ENCODE measurements at regions of chr4 and their contacts with region 1.

Region 1: GRCh38 chr4:76377911-76378310 is 43.0 kb downstream of the CCDC158 start:
- DNase-seq: peak; percentile 37 to 65 (median 60)
- H3K4me3 ChIP-seq: no peak overlapping the region
- H3K27ac ChIP-seq: no peak overlapping the region
- H3K4me1 ChIP-seq: peaks cover 0 to 5% (median 1%) of the 10 kb centered on the region in 4 experiments
- H3K27me3 ChIP-seq: no peaks in the 10 kb centered on the region

Region 2: GRCh38 chr4:76279472-76279871 is 98.4 kb before region 1 on chr4:
- CTCF ChIA-PET with region 1: interaction called, 54 read pairs
- POLR2A ChIA-PET with region 1: no interaction called
- DNase-seq: peak; percentile 28 to 36 (median 36)
- H3K4me3 ChIP-seq: no peak overlapping the region
- H3K27ac ChIP-seq: no peak overlapping the region
- H3K4me1 ChIP-seq: peaks cover 0 to 4% (median 0%) of the 10 kb centered on the region in 4 experiments
- H3K27me3 ChIP-seq: no peaks in the 10 kb centered on the region

Region 3: DNA sequence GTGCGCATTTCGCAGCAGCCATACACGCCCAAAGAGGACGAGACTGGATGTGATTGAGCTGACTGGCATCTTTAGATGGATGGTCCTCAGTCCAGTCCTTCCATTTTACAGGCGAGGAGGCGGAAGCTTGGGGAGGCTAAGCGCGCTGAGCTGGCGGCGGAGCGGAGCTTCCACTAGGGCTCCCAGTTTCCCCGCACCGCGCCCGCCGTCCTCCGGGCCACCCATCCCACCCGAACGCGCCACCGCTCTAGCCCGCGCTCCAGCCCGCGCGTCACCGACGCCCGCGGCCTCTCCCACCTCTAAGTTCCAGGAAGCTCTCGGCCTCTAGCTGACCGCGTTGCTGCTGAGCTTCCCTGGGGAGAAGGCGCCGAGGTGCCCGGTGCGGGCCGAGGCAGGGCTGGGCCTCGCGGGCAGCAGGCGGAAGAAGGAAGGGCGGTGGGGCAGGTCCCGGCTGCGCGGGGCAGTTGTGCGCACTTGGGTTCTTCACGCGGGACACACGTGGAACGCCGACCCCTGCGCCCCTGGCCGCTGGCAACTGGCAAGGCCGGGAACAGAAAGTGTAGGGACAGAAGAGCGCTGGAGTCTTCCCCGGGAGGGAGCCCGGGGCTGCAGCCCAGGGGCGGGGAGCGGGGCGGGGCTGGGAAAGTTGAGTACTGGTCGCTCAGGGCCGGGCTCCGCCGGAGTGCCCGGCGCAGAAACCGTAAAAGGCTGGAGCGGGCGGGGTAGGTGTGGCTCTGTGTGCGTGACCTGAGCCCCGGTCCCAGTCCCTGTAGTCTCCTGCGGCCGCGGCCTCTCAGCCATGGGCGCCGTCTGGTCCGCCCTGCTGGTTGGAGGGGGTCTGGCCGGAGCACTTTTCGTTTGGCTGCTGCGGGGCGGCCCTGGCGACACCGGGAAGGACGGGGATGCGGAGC is 71.7 kb before region 1 on chr4 and contains the start of gene STBD1:
- CTCF ChIA-PET with region 1: interaction called, 40 read pairs
- POLR2A ChIA-PET with region 1: no interaction called
- DNase-seq: peak; percentile 39 to 74 (median 58)
- H3K4me3 ChIP-seq: peak within 1 kb of the TSS; percentile 74 to 91 (median 84)
- H3K27ac ChIP-seq: peak within 1 kb of the TSS in 1 of 2 experiments; percentile 49
- H3K4me1 ChIP-seq: peaks cover 18 to 53% (median 41%) of the 10 kb centered on the region in 4 experiments
- H3K27me3 ChIP-seq: no peaks in the 10 kb centered on the region

Region 4: GRCh38 chr4:76341063-76341462 is 36.8 kb before region 1 on chr4:
- CTCF ChIA-PET with region 1: interaction called, 14 read pairs
- POLR2A ChIA-PET with region 1: no interaction called
- DNase-seq: peak in 2 of 3 donors; percentile 10 to 20
- H3K4me3 ChIP-seq: no peak overlapping the region
- H3K27ac ChIP-seq: no peak overlapping the region
- H3K4me1 ChIP-seq: no peaks in the 10 kb centered on the region
- H3K27me3 ChIP-seq: no peaks in the 10 kb centered on the region

Measured in common myeloid progenitor, CD34-positive (primary cell).